GM10248 (cell line): ENCODE measurements at regions of chr14 and their contacts with region 1.

Region 1: DNA sequence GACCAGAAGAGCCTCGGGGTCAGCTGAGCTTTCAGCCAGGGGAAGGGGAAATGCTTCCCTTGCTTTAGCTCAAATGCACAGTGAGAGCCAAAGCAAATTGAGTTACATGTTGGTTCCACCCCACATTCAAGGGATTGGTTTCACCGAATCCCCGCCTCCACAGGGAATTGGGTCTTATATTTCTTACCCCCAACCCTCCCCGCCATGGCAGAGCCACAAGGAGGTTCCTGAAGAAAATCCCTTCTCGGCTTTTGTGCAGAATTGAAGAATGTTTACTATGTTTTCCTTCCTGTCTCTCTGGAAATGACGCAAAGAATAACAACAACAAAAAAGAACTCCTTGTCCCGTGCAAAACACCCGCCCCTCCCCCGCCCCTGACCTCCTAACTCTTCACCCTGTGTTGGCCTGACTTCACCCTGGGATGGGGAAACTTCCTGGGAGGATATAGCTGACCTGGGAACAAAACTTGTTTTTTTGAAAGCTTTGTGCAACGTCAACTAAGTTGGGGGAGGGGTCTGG is 21.9 kb upstream of the CIPC start:
- DNase-seq: no peak
- CTCF ChIP-seq: no peak

Region 2: DNA sequence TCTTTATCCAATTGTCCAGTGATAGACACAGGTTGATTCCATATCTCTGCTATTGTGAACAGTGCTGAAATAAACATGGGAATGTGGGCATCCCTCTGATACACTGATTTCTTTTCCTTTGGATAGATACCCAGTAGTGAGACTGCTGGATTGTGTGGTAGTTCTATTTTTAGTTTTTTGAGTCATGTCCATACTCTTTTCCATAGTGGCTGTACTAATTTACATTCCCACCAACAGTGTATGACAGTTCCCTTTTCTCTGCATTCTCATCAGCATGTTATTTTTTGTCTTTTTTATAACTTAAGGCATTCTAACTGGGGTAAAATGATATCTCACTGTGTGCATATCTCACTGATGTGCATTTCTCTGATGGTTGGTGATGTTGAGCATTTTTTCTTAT is 339.7 kb before region 1 on chr14:
- CTCF ChIA-PET with region 1: no interaction called
- POLR2A ChIA-PET with region 1: no interaction called
- DNase-seq: no peak
- CTCF ChIP-seq: no peak

Region 3: DNA sequence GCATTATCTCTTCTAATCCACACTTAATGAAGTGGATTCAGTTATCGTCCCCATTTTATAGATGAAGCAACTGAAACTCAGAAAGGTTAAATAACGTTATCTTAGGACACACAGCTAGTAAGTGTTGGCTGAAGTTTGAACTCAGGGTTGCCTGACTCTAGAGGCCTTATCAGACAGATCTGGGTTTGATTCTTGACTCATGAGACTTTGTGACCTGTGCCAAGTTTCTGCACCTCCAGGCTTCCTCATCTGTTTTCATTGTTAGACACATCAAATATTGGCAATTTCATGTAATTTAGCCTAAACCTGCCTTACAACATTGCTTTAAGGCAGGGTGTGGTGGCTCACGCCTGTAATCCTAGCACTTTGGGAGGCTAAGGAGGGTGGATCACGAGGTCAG is 29.4 kb before region 1 on chr14:
- CTCF ChIA-PET with region 1: interaction called, 72 read pairs
- POLR2A ChIA-PET with region 1: no interaction called
- DNase-seq: no peak
- CTCF ChIP-seq: no peak

Region 4: DNA sequence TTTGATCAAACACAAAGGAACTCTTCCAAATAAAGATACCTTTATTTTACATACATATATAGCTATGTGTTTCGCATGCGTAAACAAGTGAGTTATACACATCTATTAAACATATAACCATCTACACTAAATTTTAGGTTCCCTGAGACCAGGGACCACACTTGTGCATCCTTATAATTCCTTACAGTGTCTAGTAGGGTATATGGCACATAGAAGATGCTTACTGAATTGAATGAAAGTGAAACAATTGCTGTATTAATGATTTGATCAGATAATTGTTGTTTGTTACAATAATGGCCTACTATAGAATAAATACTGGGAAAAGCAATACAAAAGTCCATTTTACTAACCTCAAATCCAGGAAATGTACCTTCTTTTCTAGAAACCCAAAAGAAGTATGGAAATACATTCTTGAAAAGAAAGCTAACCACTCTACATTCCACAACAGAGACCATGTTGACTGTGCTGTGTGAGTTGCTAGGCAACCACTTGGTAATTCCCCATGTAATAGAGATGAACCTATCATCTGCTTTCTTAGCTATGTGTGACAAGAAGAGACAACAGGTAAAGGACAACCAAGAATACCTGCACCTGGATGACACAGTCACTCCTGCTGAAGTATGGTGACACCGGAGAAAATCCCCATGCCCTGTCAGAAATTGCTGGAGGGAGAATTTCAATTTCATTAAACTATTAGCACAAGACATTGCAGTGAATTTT is 10.0 kb after region 1 on chr14:
- CTCF ChIA-PET with region 1: interaction called, 189 read pairs
- POLR2A ChIA-PET with region 1: no interaction called
- DNase-seq: peak; percentile 46
- CTCF ChIP-seq: no peak

Region 5: GRCh38 chr14:77195771-77196201 is 119.6 kb after region 1 on chr14:
- CTCF ChIA-PET with region 1: no interaction called
- POLR2A ChIA-PET with region 1: no interaction called
- DNase-seq: no peak
- CTCF ChIP-seq: no peak